ENCODE measurements at regions of chr2 and their contacts with region 1.

Region 1: DNA sequence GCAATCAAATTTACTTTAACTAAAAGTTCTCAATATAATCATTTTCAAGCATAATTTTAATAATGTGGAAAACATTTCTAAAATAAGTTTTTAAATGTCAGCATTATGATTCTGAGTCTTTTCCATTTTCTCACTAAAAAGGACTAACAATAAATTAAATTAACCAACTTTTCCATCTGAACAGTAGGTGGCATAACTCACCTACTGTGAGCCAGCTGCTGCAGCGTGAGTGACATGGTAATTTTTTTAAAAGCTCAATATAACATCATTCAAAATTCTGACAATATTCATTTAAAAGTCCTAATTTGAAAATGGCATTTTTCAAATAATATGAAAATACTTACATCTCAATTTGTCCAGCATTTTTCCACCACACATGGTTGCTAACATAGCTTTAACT is 66.5 kb downstream of the DTNB start:
- DNase-seq: peak; percentile 60
- ATAC-seq: peak; percentile 55
- H3K4me3 ChIP-seq: no peak overlapping the region
- H3K27ac ChIP-seq: no peak overlapping the region
- H3K4me1 ChIP-seq: no peaks in the 10 kb centered on the region
- H3K27me3 ChIP-seq: no peaks in the 10 kb centered on the region
- CTCF ChIP-seq: peak; percentile 91

Region 2: DNA sequence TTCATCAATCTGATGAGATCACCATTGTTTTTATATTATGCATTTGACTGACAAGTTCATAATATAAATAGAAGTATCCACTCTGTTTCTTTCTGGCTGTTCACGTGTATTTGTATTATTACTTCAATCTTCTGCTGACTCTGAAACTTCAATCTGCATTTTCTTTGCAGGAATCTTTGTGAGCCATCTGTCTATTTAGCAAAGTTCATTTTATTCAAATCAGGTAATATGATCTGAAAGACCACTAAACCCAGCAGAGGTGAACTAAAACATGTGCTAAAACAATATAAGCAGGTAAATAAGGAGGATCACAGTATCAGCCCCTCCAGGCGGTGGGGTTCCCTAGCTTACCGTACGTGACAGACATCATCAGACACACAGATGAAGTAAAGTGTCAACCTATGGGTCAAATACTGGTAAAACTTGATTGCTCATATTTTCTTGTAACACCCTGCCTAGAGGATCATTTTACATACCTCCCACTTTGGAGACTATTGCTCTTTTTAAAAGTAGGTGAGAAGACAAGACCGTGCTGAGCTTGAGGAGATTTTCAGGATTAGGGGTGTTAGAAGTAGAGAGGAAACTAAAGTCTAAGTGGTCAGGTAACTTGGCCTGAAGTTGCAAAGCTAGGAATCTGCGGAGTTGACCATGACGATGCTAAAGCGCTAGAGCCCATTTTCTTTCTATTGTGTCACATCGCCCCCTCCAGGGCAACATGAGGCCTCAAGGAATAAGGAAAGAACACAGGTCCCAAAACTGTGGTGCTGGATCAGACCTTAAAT is 57.5 kb after region 1 on chr2:
- CTCF ChIA-PET with region 1: interaction called, 77 read pairs
- POLR2A ChIA-PET with region 1: no interaction called
- intact Hi-C with region 1: loop called (anchors 1 kb)
- DNase-seq: peak; percentile 80
- ATAC-seq: peak; percentile 98
- H3K4me3 ChIP-seq: peak overlapping the region; percentile 56
- H3K27ac ChIP-seq: peak overlapping the region; percentile 12; the same call in 1 of the 2 replicates
- H3K4me1 ChIP-seq: peaks cover 11% of the 10 kb centered on the region
- H3K27me3 ChIP-seq: no peaks in the 10 kb centered on the region
- CTCF ChIP-seq: peak; percentile 95

Region 3: GRCh38 chr2:25714740-25715139 is 107.8 kb after region 1 on chr2:
- CTCF ChIA-PET with region 1: interaction called, 12 read pairs
- POLR2A ChIA-PET with region 1: no interaction called
- intact Hi-C with region 1: loop called (anchors 1 kb)
- DNase-seq: peak; percentile 51
- ATAC-seq: peak; percentile 93
- H3K4me3 ChIP-seq: no peak overlapping the region
- H3K27ac ChIP-seq: no peak overlapping the region
- H3K4me1 ChIP-seq: peaks cover under 1% of the 10 kb centered on the region; the same call in 1 of the 2 replicates
- H3K27me3 ChIP-seq: no peaks in the 10 kb centered on the region
- CTCF ChIP-seq: peak; percentile 52; the same call in 1 of the 2 replicates

Region 4: DNA sequence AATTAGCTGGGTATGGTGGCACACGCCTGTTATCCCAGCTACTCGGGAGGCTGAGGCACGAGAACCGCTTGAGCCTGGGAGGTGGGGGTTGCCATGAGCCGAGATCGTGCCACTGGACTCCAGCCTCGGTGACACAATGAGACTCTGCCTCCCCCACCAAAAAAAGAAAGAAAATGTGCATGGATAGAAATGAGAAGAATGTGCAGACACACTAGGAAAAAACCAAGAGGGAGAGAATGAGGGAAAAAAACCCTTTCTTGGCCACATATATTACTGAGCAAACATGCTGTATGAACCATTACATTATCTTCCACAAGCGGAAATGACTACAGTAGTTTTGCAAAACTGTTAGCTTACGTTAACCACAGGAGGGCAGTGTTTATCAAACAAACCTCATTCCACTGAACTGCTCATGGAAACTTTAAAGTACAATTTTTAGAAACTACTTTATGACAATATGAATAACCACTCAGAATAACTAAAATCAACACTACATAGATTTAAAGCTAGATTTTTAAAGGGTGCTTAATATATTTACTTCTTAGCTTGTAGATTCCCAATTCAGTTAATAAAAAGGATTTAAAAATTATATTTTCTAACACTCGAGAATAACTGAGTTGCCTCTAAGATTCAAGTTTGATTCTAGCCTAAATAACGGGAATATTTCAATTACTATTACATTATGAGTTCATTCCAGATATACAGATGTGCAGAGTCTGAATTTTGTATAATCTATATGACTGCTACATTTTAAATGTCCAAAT is 245.0 kb after region 1 on chr2:
- CTCF ChIA-PET with region 1: interaction called, 7 read pairs
- POLR2A ChIA-PET with region 1: no interaction called
- intact Hi-C with region 1: loop called (anchors 5 kb)
- DNase-seq: peak; percentile 87
- ATAC-seq: peak; percentile 96
- H3K4me3 ChIP-seq: peak overlapping the region; percentile 53
- H3K27ac ChIP-seq: peak overlapping the region; percentile 22; the same call in 1 of the 2 replicates
- H3K4me1 ChIP-seq: peaks cover 14% of the 10 kb centered on the region
- H3K27me3 ChIP-seq: no peaks in the 10 kb centered on the region
- CTCF ChIP-seq: peak; percentile 82

Measured in PC-3 (cell line).